Colonic mucosa (tissue), 4 donors: ENCODE measurements at regions of chr4 and their contacts with region 1.

Region 1: DNA sequence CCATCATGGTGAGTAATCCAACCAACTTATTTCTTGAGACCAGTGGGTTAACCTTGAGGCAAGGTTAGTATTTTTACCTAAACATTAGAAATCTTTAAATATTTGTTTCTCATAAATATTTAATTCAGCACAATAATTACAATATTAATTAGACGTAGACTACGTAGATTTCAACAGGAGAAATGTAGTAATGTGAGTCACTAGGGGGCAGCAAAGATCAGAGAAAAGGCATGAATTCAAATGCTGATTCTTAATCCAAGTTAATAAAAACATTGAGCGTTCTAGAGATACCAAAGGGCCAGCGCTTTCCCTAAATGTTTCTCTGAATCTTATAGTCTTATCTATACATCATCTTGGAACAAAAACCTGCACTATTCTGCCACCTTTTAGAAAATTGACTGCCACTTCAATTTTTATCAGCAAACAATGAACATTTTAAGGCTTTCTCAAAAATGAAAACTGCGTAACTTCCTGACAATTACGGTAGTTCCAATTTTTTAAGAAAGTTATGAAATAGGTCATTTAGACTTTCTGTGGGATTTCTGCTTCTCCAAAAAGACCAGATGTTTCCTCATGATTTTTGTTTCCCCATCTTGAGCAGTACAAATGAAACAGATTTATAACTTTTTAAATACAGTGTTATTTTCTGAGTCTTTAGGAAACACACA is 180.7 kb downstream of the GASK1B start:
- DNase-seq: peak; percentile 77
- H3K4me3 ChIP-seq: no peak overlapping the region
- H3K27ac ChIP-seq: peak overlapping the region; percentile 1
- H3K4me1 ChIP-seq: peaks cover 4% of the 10 kb centered on the region
- H3K27me3 ChIP-seq: no peaks in the 10 kb centered on the region
- CTCF ChIP-seq: peak; percentile 61

Region 2: GRCh38 chr4:158172261-158173258 is 180.4 kb after region 1 on chr4 and contains the start of gene GASK1B:
- intact Hi-C with region 1: loop called (anchors 5 kb)
- DNase-seq: peak; percentile 75
- H3K4me3 ChIP-seq: peak within 1 kb of the TSS; percentile 23
- H3K27ac ChIP-seq: peak within 1 kb of the TSS; percentile 9
- H3K4me1 ChIP-seq: peaks cover 4% of the 10 kb centered on the region
- H3K27me3 ChIP-seq: no peaks in the 10 kb centered on the region
- CTCF ChIP-seq: peak; percentile 54
- total RNA-seq, gene GASK1B: 13.6 to 18.0 TPM

Region 3: GRCh38 chr4:158255727-158256324 is 263.7 kb after region 1 on chr4:
- intact Hi-C with region 1: loop called (anchors 5 kb)
- DNase-seq: no peak
- H3K4me3 ChIP-seq: no peak overlapping the region
- H3K27ac ChIP-seq: no peak overlapping the region
- H3K4me1 ChIP-seq: no peaks in the 10 kb centered on the region
- H3K27me3 ChIP-seq: no peaks in the 10 kb centered on the region
- CTCF ChIP-seq: peak; percentile 70